Endothelial cell of umbilical vein (primary cell): ENCODE measurements at regions of chr14 and their contacts with region 1.

Region 1: GRCh38 chr14:100268591-100269207 is 29.8 kb downstream of the YY1 start:
- DNase-seq: no peak
- H3K4me3 ChIP-seq: no peak overlapping the region
- H3K27ac ChIP-seq: no peak overlapping the region
- H3K4me1 ChIP-seq: no peaks in the 10 kb centered on the region
- H3K27me3 ChIP-seq: no peaks in the 10 kb centered on the region
- CTCF ChIP-seq: no peak
- POLR2A ChIP-seq: no peak

Region 2: DNA sequence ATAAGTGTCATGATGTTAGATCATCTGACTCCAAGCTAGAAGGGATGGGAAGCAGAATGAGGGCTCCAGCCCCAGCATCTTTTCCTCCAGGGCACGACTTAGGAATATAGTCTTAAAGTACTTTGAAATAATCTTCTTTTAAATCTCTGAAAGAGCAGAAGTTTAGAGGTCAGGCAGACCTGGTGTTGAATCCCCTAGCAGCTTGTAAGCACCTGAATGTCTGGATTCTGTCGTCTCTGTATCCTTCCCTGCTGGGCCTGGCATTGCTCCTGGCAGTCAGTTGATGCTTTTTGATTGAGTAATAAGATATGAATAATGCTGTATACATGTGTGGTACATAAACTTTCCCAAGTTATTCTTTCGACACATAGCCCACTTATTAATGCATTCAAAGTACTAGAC is 172.1 kb before region 1 on chr14:
- CTCF ChIA-PET with region 1: no interaction called
- POLR2A ChIA-PET with region 1: no interaction called
- dilution Hi-C with region 1: no loop called
- intact Hi-C with region 1: no loop called
- DNase-seq: no peak
- H3K4me3 ChIP-seq: no peak overlapping the region
- H3K27ac ChIP-seq: no peak overlapping the region
- H3K4me1 ChIP-seq: no peaks in the 10 kb centered on the region
- H3K27me3 ChIP-seq: no peaks in the 10 kb centered on the region
- CTCF ChIP-seq: no peak
- POLR2A ChIP-seq: no peak

Region 3: DNA sequence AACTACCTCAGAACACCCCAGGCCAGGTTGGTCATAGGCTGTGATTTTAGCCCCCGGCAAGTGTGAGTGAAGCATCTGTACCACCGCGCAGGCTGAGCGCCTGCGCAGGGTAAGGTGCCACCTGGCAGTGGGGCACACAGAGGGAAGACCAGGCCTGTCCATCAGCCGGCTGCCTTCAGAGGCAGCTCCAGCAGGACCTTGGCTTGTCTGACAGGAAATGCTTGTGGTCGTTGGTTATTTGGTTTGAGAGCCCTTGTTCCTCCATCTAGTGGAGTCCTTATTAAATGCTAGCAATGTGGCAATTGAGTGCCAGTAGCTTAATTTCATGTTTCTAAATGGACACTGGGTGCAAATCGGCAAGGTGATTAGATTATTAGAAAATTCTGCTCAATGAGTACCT is 10.0 kb after region 1 on chr14:
- CTCF ChIA-PET with region 1: interaction called, 13 read pairs
- POLR2A ChIA-PET with region 1: no interaction called
- dilution Hi-C with region 1: no loop called
- intact Hi-C with region 1: no loop called
- DNase-seq: peak; percentile 40
- H3K4me3 ChIP-seq: no peak overlapping the region
- H3K27ac ChIP-seq: peak overlapping the region; percentile 21
- H3K4me1 ChIP-seq: peaks cover 19% of the 10 kb centered on the region
- H3K27me3 ChIP-seq: no peaks in the 10 kb centered on the region
- CTCF ChIP-seq: peak; percentile 5 to 15
- POLR2A ChIP-seq: no peak

Region 4: DNA sequence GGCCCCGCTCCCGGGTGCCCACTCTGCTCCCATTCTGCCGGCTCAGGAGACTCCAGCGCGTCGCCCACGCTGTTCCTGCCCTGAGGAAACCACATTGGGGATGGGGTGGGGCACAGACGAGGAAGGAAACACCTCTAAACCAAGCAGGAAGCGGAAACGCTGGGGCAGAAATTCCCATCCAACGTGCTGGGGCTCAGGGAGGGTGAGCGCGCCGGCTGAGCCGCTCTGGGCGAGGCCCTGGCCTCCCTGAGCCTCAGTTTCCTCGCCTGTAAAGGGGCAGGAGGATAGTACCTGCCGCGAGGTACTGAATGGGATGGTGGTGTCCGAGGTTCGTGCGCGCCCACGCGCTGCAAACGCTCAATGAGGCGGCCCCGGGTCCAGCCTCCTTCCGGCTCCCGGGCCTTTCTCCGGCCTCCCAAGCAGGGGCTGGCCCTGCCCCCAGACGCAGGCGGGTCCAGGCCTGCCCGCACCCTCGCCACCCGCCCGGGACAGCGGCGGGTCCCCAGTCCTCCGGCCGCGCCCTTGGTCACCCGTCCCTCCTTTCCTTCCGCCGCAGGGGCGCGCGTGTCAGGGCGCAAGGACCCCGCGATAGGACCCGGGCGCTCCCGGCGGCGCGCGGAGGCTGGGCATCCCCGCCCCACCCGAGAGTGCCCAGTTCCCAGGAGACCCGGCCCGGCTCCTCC is 317.8 kb after region 1 on chr14:
- CTCF ChIA-PET with region 1: no interaction called
- POLR2A ChIA-PET with region 1: no interaction called
- dilution Hi-C with region 1: no loop called
- intact Hi-C with region 1: no loop called
- DNase-seq: no peak
- H3K4me3 ChIP-seq: peak overlapping the region in 2 of 3 experiments; percentile 33 to 36
- H3K27ac ChIP-seq: no peak overlapping the region
- H3K4me1 ChIP-seq: peaks cover 6% of the 10 kb centered on the region
- H3K27me3 ChIP-seq: peaks cover 11 to 13% of the 10 kb centered on the region in 2 experiments
- CTCF ChIP-seq: no peak
- POLR2A ChIP-seq: no peak